Endothelial cell of umbilical vein (primary cell): ENCODE measurements at regions of chr11 and their contacts with region 1.

Region 1: DNA sequence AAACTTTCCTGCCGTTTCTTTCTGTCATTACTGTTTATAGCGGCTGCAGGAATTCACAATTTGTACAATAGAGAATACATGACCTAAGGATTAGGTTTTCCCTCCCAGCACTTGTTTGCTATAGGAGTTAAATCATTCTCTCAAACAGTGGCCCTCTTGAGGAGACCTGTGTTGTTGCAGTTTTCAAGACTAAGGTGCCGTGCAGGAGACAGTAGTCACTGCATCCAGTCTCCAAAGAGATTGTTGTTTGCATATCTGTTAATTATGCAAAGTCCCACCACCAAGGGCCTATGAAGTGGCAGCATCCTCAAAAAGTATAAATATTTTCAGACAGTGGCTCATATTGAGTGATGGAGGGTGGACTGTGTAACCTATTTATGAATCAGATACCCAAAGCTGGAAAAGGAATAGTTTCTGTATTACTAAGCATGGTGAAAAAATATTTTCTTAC is 2.3 kb downstream of the PRSS23 start:
- DNase-seq: peak; percentile 80
- H3K4me3 ChIP-seq: peak overlapping the region; percentile 82 to 96 (median 95)
- H3K27ac ChIP-seq: peak overlapping the region; percentile 96
- H3K4me1 ChIP-seq: peaks cover 63% of the 10 kb centered on the region
- H3K27me3 ChIP-seq: no peaks in the 10 kb centered on the region
- CTCF ChIP-seq: peak; percentile 57 to 60
- POLR2A ChIP-seq: no peak

Region 2: GRCh38 chr11:86523738-86524619 is 278.6 kb before region 1 on chr11:
- CTCF ChIA-PET with region 1: interaction called, 3 read pairs
- POLR2A ChIA-PET with region 1: no interaction called
- dilution Hi-C with region 1: no loop called
- intact Hi-C with region 1: loop called (anchors 1 kb)
- DNase-seq: peak; percentile 99
- H3K4me3 ChIP-seq: peak overlapping the region in 1 of 3 experiments; percentile 14
- H3K27ac ChIP-seq: peak overlapping the region; percentile 93
- H3K4me1 ChIP-seq: peaks cover 46% of the 10 kb centered on the region
- H3K27me3 ChIP-seq: no peaks in the 10 kb centered on the region
- CTCF ChIP-seq: no peak
- POLR2A ChIP-seq: peak; percentile 54

Region 3: DNA sequence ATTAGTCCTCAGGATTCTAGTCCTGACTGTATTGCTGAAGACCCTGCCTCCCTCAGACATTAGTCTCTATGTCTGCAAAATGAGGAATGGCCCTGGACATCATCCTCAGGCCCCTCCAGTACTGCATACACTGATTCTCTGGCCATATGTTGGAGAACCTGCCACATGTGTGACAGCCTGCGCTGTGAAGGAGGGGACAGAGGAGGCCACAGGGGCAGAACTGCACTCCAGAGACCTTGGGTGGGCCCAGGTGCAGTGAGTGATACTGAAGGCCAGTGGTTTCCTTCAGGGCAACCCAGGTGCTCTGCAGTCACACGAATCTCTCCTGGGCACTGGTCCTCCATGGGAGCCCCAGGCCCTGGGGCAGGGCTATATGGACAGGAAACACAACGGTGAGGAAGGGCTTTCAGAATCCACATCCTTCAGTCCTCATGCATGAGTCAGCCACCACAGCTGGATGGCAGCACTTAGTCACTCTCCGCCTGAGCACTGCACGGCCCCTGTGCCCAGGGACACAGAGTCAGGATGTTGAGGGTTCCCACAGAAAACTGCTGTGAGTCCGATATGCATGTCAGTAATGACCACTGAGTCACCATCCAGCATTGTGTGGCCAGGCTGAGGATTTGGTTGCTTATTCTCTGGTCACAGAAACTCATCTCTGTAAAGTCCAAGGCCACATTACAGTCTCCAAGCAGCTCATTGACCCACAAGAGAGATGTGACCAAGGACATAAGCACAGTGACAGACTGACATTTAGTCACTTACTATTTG is 169.9 kb before region 1 on chr11:
- CTCF ChIA-PET with region 1: no interaction called
- POLR2A ChIA-PET with region 1: no interaction called
- dilution Hi-C with region 1: no loop called
- intact Hi-C with region 1: loop called (anchors 2 kb)
- DNase-seq: peak; percentile 96
- H3K4me3 ChIP-seq: no peak overlapping the region
- H3K27ac ChIP-seq: peak overlapping the region; percentile 83
- H3K4me1 ChIP-seq: peaks cover 19% of the 10 kb centered on the region
- H3K27me3 ChIP-seq: no peaks in the 10 kb centered on the region
- CTCF ChIP-seq: peak in 1 of 2 donors; percentile 55
- POLR2A ChIP-seq: no peak

Region 4: GRCh38 chr11:86696004-86696403 is 106.6 kb before region 1 on chr11:
- CTCF ChIA-PET with region 1: interaction called, 11 read pairs
- POLR2A ChIA-PET with region 1: no interaction called
- dilution Hi-C with region 1: no loop called
- intact Hi-C with region 1: no loop called
- DNase-seq: peak; percentile 84
- H3K4me3 ChIP-seq: no peak overlapping the region
- H3K27ac ChIP-seq: peak overlapping the region; percentile 56
- H3K4me1 ChIP-seq: peaks cover 15% of the 10 kb centered on the region
- H3K27me3 ChIP-seq: no peaks in the 10 kb centered on the region
- CTCF ChIP-seq: no peak
- POLR2A ChIP-seq: no peak

Region 5: DNA sequence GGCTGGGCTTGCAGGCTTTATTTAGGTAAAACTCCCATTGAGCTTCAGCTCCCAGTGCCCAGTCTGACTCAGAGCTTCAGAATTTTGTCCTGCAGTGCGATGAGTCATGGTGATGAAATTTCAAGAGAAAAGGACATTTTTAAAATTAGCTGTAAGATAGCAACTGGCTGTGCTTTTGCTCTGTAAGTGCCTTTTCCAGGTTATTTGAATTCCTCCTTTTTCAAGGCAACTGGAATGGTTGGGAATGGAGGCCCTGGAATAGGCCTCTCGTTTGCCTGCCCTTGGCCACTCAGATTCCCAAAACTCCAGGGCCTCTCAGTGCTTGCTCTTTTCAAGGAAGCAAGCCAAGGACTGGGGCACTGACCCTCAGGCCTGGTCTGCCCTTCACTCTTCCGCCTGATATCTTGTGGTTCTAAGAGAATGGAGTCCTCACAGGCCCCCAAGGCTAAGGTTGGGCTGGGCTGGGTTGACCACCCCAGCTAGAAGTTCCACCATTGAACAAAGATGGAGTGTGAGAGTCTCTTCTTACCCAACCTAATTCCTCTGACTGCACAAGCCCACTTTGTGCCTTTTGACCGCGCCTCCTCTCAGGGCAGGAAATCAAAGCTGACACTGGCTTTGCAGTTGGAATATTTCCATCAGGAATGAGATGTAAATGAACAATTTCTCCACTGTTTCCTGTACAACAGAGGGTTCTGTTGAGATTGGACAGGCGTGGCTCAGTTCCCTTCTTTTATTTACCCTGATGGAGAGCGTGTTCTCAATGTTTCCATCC is 61.7 kb before region 1 on chr11:
- CTCF ChIA-PET with region 1: interaction called, 15 read pairs
- POLR2A ChIA-PET with region 1: interaction called, 5 read pairs
- dilution Hi-C with region 1: no loop called
- intact Hi-C with region 1: loop called (anchors 1 kb)
- DNase-seq: peak; percentile 94
- H3K4me3 ChIP-seq: peak overlapping the region in 1 of 3 experiments; percentile 7
- H3K27ac ChIP-seq: peak overlapping the region; percentile 99
- H3K4me1 ChIP-seq: peaks cover 78% of the 10 kb centered on the region
- H3K27me3 ChIP-seq: no peaks in the 10 kb centered on the region
- CTCF ChIP-seq: no peak
- POLR2A ChIP-seq: no peak